MCF 10A (cell line): ENCODE measurements at regions of chr4 and their contacts with region 1.

Region 1: DNA sequence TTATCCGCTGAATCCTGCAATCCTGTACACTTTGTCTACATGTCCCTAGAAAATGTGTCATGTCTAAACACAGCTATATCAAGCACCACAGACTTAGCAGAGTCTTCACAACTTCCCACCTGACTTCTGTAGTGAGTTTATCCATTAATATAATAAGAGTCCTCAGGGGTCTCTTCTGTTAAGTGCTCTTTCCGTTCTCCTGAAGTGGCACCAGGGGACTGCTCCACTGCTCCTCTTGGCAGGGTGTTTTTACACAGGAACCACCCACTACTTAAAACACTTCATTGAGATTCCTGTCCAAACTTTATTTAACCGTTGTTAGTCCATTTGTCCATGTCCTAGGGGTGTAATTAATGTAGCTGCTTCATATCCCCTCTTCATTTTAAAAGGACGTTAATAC is 1000.4 kb downstream of the STPG2 start:
- DNase-seq: no peak
- H3K4me3 Mint-ChIP-seq: no peak overlapping the region
- H3K27ac Mint-ChIP-seq: no peak overlapping the region
- H3K4me1 Mint-ChIP-seq: peaks cover 16% of the 10 kb centered on the region
- H3K27me3 Mint-ChIP-seq: no peaks in the 10 kb centered on the region
- CTCF ChIP-seq: no peak

Region 2: DNA sequence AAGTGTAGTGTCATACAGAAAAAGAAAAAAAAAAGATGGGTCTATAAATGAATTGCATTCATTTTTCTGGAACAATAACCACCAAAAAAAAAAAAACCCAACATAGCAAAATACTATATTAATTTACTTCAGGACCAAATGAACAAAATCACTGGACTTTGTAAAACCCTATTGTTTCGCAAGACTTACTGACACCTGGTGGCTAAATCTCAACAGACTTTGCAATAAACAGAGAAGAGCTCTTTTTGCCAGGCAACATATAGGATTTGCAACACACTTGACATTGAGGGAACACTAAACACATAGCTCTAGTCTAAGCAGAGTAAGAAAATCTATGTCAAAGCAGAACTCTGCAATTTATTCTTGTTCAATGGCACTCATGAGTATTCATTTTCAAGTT is 10.1 kb after region 1 on chr4:
- CTCF ChIA-PET with region 1: interaction called, 15 read pairs
- POLR2A ChIA-PET with region 1: no interaction called
- intact Hi-C with region 1: no loop called
- DNase-seq: peak; percentile 42
- H3K4me3 Mint-ChIP-seq: no peak overlapping the region
- H3K27ac Mint-ChIP-seq: no peak overlapping the region
- H3K4me1 Mint-ChIP-seq: peaks cover 6% of the 10 kb centered on the region
- H3K27me3 Mint-ChIP-seq: no peaks in the 10 kb centered on the region
- CTCF ChIP-seq: peak; percentile 29

Region 3: DNA sequence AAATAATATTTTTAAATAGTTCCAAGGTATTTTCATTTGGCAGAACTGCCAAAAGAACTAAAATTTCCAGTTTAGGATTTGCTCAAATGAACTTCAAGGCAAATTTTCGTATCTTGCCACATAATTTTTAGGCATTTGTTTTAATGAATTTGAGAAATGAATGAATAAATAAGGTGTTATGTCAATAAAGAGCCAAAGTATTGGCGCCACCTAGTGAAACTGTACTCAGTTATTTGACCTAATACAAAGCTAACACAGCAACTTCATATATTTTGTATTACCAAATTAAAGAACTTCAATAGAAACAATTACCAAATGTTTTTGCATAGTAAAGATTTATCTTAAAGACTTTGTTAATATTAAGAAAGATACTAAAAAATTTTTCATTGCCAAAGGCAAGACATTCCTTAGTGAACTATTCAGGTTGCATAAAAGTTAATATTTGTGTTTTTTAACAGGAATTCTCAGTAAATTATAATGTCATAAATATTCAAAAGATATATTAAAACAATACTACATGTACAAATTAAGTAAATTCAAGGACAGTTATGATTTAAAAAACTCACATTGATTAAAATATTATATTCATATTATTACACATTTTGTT is 950.0 kb after region 1 on chr4:
- CTCF ChIA-PET with region 1: no interaction called
- POLR2A ChIA-PET with region 1: no interaction called
- intact Hi-C with region 1: no loop called
- DNase-seq: peak; percentile 46
- H3K4me3 Mint-ChIP-seq: no peak overlapping the region
- H3K27ac Mint-ChIP-seq: no peak overlapping the region
- H3K4me1 Mint-ChIP-seq: peaks cover 6% of the 10 kb centered on the region
- H3K27me3 Mint-ChIP-seq: no peaks in the 10 kb centered on the region
- CTCF ChIP-seq: peak; percentile 26